PC-9 (cell line): ENCODE measurements at regions of chr3 and their contacts with region 1.

Region 1: DNA sequence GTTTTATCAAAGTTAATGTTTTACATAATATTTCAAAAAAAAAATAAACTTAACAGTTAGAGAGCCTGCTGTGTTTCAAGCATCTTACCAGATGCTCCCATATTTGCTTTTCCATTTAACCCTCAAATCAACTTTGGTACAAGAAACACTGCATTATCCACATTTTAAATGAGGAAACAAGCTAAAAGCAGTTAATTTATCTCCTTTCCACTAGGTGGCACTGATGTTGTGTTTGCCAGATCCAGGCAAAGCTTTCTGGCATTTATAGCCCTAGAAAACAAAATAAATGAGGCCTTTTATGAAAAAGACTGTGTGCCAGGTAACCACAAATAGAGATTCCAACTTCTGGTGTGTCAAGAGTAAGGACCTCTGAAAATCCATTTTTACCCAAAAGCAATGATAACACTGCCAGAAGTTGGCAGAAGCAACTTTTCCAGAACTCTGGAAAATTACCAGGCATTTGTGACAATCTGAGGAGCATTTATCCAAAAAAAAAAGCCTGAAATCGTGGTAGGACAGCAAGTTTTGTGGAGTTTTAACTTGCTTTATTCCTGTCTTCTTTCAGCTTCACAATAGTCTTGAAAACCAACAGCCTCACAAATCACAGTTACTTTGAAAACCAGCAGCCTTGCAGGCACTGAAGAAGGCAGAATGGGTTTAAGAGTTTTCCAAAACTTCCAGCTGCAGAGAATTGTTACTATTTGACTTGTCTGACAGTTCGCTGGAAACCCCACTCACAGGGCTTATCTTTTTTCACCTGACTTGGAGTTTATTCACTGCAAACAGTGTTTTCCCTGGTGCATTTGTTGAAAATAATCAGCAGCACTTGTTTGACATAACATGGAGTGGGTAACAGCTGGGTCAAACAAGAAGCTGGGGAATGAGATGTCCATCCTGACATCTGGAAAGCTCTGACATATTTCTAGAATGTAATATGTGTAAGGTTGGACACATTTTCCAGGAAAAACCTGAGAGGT is 9.2 kb downstream of the FAM162A start:
- DNase-seq: peak in 1 of 2 experiments; percentile 9
- H3K4me3 ChIP-seq: no peak overlapping the region
- H3K27ac ChIP-seq: no peak overlapping the region
- H3K4me1 ChIP-seq: no peaks in the 10 kb centered on the region
- H3K27me3 ChIP-seq: no peaks in the 10 kb centered on the region
- CTCF ChIP-seq: peak; percentile 91

Region 2: DNA sequence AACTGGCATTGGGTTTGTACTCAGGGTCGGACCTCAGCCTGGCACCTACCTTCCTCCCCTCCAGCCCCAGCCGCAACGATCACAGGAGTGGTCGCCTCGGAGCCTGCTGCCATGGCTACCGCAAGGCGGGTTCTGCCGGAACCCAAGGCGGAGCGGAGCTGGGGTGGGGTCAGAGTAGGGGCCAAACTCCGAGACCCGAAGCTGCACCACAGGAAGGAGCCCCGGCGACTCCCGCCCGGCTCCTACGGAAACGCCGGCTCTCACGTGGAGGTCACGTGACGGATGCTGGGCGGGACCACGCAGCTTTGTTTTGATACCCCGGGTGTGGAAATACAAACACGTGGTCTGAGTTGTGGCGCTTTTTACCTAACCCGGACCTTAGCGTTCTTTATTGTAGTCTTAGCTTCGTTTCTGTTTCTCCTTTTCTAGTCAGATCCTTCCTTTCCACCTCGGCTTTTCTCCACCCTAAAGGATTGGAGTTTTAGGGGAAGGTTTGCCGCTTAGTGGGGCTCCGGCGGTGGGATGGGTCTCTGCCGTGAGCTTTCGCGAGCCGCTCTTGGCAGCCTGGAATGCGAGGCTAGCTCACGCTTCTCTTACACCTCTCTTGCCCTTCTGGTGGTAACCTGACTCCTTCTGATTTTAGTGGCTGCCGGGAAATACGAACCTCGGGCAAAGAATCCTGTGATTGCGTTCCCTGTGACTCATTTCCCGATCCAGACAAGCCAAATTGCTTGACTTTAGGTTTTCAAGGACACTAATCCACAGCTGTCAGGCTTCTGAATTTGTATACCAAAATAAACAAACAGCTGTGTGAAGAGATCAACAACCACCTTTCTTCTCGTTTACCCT is 400.6 kb after region 1 on chr3 and contains the start of gene HSPBAP1:
- CTCF ChIA-PET with region 1: no interaction called
- POLR2A ChIA-PET with region 1: no interaction called
- intact Hi-C with region 1: loop called (anchors 10 kb)
- DNase-seq: peak; percentile 88 to 91
- H3K4me3 ChIP-seq: peak within 1 kb of the TSS; percentile 80
- H3K27ac ChIP-seq: peak within 1 kb of the TSS; percentile 92
- H3K4me1 ChIP-seq: peaks cover 28% of the 10 kb centered on the region
- H3K27me3 ChIP-seq: no peaks in the 10 kb centered on the region
- CTCF ChIP-seq: no peak
- total RNA-seq, gene HSPBAP1: 8.9 and 10.9 TPM in 2 replicates